ENCODE measurements at regions of chr3 and their contacts with region 1.

Region 1: GRCh38 chr3:9843715-9844438 is at the start of gene RPUSD3:
- DNase-seq: peak; percentile 98 to 99 (median 99)
- ATAC-seq: peak; percentile 98 to 99
- H3K4me3 ChIP-seq: peak within 1 kb of the TSS; percentile 56
- H3K27ac ChIP-seq: peak within 1 kb of the TSS; percentile 50
- H3K4me1 ChIP-seq: no peaks in the 10 kb centered on the region
- H3K27me3 ChIP-seq: no peaks in the 10 kb centered on the region
- total RNA-seq, gene RPUSD3: 31.2 to 37.7 (median 37.6) TPM

Region 2: DNA sequence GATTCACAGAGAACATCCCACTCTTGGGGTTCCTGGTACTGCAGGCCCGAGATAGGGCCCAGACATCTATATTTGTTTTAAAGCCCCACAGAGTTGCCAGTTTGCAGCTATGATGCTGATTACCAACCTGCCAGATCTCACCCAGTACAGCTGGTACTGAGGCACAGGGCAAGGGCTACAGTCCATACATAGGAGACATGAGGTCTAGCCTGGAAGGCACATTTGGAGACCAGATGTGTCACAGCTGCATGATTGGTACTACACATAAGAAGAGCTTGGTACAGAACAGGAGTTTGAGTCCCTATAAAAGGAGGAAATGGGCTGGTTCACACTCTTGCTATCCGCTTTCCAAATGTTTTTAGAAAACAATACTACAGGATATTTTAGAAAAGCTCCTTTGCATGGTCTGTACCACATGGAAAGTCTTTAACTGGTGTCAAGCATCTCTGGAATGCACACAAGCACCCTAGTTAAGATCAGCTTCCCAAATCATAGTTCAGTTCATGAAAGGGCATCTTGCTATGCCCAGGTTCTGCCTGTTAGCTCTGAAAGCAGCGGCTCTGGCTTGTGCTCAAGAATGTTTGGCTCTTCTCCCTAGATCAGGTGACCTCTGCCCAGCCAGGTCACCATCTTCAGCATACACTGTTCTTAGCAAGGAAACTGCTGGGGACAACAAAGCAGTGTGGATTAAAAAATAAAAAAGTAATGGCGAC is 174.0 kb before region 1 on chr3:
- intact Hi-C with region 1: no loop called
- DNase-seq: peak in 2 of 3 donors; percentile 35 to 78
- ATAC-seq: peak; percentile 77 to 80
- H3K4me3 ChIP-seq: no peak overlapping the region
- H3K27ac ChIP-seq: peak overlapping the region; percentile 88
- H3K4me1 ChIP-seq: peaks cover 11% of the 10 kb centered on the region
- H3K27me3 ChIP-seq: no peaks in the 10 kb centered on the region

Region 3: GRCh38 chr3:9769426-9770275 is 74.2 kb before region 1 on chr3 and contains the start of gene CAMK1:
- intact Hi-C with region 1: no loop called
- DNase-seq: peak; percentile 88 to 95 (median 95)
- ATAC-seq: peak; percentile 93 to 94
- H3K4me3 ChIP-seq: peak within 1 kb of the TSS; percentile 80
- H3K27ac ChIP-seq: peak within 1 kb of the TSS; percentile 80
- H3K4me1 ChIP-seq: peaks cover 5% of the 10 kb centered on the region
- H3K27me3 ChIP-seq: no peaks in the 10 kb centered on the region
- total RNA-seq, gene CAMK1: 20.1 to 24.9 (median 21.0) TPM

Region 4: DNA sequence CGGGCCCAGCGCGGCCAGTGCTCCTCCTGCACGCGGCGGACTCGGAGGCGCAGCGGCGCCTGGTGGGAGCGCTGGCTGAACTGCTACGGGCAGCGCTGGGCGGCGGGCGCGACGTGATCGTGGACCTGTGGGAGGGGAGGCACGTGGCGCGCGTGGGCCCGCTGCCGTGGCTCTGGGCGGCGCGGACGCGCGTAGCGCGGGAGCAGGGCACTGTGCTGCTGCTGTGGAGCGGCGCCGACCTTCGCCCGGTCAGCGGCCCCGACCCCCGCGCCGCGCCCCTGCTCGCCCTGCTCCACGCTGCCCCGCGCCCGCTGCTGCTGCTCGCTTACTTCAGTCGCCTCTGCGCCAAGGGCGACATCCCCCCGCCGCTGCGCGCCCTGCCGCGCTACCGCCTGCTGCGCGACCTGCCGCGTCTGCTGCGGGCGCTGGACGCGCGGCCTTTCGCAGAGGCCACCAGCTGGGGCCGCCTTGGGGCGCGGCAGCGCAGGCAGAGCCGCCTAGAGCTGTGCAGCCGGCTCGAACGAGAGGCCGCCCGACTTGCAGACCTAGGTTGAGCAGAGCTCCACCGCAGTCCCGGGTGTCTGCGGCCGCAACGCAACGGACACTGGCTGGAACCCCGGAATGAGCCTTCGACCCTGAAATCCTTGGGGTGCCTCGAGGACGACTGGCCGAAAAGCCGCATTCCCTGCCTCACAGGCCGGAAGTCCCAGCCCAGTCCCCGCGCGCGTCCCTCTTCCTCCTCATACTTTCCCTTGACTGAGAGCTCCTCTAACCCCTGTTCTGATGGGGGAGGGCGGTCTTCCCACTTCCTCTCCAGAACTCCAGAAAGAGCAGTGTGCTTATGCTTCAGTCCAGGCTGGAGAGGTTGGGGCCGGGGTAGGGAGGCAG is 71.6 kb after region 1 on chr3:
- intact Hi-C with region 1: loop called in 1 of 4 experiments (anchors 10 kb)
- DNase-seq: peak; percentile 79 to 92 (median 91)
- ATAC-seq: peak; percentile 67 to 69
- H3K4me3 ChIP-seq: peak overlapping the region; percentile 35
- H3K27ac ChIP-seq: peak overlapping the region; percentile 77
- H3K4me1 ChIP-seq: peaks cover 6% of the 10 kb centered on the region
- H3K27me3 ChIP-seq: no peaks in the 10 kb centered on the region

Measured in right cardiac atrium (tissue), 5 donors.